Naive thymus-derived CD4-positive, alpha-beta T cell (primary cell): ENCODE measurements at regions of chr12 and their contacts with region 1.

Region 1: GRCh38 chr12:119994892-119995651 is 6.0 kb downstream of the BICDL1 start:
- DNase-seq: no peak
- ATAC-seq: no peak
- H3K4me3 ChIP-seq: no peak overlapping the region
- H3K4me3 Mint-ChIP-seq: no peak overlapping the region
- H3K27ac ChIP-seq: no peak overlapping the region
- H3K27ac Mint-ChIP-seq: peak overlapping the region in 1 of 9 donors; percentile 32
- H3K4me1 ChIP-seq: peaks cover 10% of the 10 kb centered on the region in 2 donors
- H3K4me1 Mint-ChIP-seq: peaks cover 14 to 61% (median 45%) of the 10 kb centered on the region in 7 donors
- H3K27me3 ChIP-seq: no peaks in the 10 kb centered on the region
- H3K27me3 Mint-ChIP-seq: no peaks in the 10 kb centered on the region

Region 2: DNA sequence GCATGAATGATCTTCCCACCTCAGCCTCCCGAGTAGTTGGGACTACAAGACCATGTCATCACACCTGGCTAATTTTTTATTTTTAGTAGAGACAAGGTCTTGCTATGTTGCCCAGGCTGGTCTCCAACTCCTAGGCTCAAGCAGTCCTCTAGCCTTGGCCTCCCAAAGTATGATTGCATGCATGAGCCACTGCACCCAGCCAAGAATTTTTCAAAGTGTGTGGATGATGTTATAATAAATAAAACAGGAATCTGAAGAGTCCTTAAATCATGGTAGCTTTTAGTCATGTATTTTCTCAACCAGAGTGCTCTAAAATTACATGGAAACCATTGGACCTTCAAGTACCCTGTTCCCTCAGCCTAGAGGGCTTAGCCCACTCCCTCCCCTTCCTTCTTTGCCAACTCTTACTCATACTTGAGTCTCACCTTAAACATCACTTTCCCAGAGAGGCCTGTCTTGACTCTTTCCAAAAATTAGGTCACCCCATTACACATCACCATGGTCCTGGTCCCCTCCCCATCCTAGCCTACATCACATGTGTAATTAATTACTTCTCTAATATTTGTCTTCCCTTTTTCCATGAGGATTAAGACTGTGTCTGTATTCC is 58.3 kb before region 1 on chr12:
- CTCF ChIA-PET with region 1: no interaction called
- POLR2A ChIA-PET with region 1: no interaction called
- intact Hi-C with region 1: no loop called
- DNase-seq: no peak
- ATAC-seq: no peak
- H3K4me3 ChIP-seq: no peak overlapping the region
- H3K4me3 Mint-ChIP-seq: no peak overlapping the region
- H3K27ac ChIP-seq: no peak overlapping the region
- H3K27ac Mint-ChIP-seq: peak overlapping the region in 1 of 9 donors; percentile 28
- H3K4me1 ChIP-seq: no peaks in the 10 kb centered on the region
- H3K4me1 Mint-ChIP-seq: no peaks in the 10 kb centered on the region
- H3K27me3 ChIP-seq: no peaks in the 10 kb centered on the region
- H3K27me3 Mint-ChIP-seq: peaks cover 0 to 9% (median 0%) of the 10 kb centered on the region in 5 donors

Region 3: DNA sequence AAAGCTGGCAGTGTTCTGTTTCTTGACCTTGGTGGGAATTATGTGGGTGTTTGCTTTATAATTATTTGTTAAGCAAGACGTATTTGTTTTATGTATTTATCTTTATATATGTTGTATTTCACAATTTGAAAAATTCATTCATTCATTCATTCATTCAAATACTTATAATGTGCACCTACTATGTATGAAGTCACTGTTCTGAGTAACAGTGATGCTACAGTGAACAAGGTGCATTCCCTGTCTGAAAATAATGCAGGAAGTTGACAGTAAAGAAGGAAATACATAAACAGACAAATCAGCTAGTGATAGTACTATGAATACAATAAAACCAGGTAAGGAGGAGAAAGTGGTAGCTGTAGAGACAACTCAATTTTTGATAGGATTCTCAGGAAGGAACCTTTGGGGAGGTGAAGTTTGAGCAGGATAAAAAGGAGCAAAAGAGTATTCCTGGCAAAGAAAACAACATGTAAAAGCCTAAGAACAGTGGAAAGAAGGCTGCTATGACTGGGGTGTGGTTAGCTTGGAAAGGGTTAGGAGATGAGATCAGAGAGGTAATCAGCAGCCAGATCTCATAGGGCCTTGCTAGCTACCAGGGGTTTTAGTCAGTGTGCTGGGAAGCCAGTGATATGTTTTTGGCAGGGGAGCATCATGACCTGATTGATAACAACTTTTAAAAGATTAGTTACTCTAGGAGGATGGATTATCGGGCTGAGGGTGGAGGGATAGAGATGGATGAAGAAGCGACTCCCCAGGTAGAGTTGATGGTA is 11.3 kb after region 1 on chr12:
- CTCF ChIA-PET with region 1: interaction called, 6 read pairs
- POLR2A ChIA-PET with region 1: interaction called, 96 read pairs
- intact Hi-C with region 1: loop called in 1 of 2 experiments (anchors 1 kb)
- DNase-seq: peak in 2 of 9 donors; percentile 37 to 57
- ATAC-seq: peak; percentile 21
- H3K4me3 ChIP-seq: peak overlapping the region; percentile 1
- H3K4me3 Mint-ChIP-seq: peak overlapping the region; percentile 13 to 78 (median 70)
- H3K27ac ChIP-seq: peak overlapping the region; percentile 81
- H3K27ac Mint-ChIP-seq: peak overlapping the region; percentile 93 to 100 (median 96)
- H3K4me1 ChIP-seq: peaks cover 46% of the 10 kb centered on the region in 2 donors
- H3K4me1 Mint-ChIP-seq: peaks cover 18 to 68% (median 62%) of the 10 kb centered on the region in 7 donors
- H3K27me3 ChIP-seq: no peaks in the 10 kb centered on the region
- H3K27me3 Mint-ChIP-seq: no peaks in the 10 kb centered on the region